PC-3 (cell line): ENCODE measurements at regions of chr3 and their contacts with region 1.

Region 1: GRCh38 chr3:81485444-81485865 is 276.0 kb downstream of the GBE1 start:
- DNase-seq: peak; percentile 73
- ATAC-seq: peak; percentile 98
- H3K4me3 ChIP-seq: no peak overlapping the region
- H3K27ac ChIP-seq: no peak overlapping the region
- H3K4me1 ChIP-seq: peaks cover 5% of the 10 kb centered on the region
- H3K27me3 ChIP-seq: no peaks in the 10 kb centered on the region
- CTCF ChIP-seq: no peak

Region 2: DNA sequence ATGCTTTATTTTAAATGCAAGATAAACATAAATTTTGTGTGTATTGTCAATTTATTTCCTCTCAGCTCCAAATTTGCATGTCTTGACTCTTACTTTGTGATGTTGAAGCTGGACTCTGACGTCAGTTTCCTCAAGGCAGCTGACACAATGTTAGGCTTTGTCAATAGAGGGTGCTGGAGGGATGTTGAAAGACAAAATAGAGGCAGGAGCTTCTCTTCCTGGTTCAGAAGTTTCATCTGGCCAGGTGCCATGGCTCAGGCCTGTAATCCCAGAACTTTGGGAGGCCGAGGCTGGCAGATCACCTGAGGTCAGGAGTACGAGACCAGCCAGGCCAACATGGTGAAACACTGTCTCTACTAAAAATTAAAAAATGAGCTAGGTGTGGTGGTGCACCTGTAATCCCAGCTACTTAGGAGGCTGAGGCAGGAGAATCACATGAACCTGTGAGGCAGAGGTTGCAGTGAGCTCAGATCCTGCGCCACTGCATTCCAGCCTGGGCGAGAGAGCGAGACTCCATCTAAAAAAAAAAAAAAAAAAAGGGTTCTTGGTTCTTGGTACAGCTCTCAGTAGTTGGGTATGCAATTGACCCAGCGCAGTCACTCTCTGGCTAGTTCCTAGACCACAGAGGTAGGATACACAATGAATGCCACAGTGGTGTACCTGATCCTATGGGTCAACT is 132.4 kb before region 1 on chr3:
- CTCF ChIA-PET with region 1: interaction called, 3 read pairs
- POLR2A ChIA-PET with region 1: no interaction called
- intact Hi-C with region 1: loop called (anchors 5 kb)
- DNase-seq: peak; percentile 69
- ATAC-seq: peak; percentile 72
- H3K4me3 ChIP-seq: no peak overlapping the region
- H3K27ac ChIP-seq: no peak overlapping the region
- H3K4me1 ChIP-seq: no peaks in the 10 kb centered on the region
- H3K27me3 ChIP-seq: no peaks in the 10 kb centered on the region
- CTCF ChIP-seq: peak; percentile 58

Region 3: DNA sequence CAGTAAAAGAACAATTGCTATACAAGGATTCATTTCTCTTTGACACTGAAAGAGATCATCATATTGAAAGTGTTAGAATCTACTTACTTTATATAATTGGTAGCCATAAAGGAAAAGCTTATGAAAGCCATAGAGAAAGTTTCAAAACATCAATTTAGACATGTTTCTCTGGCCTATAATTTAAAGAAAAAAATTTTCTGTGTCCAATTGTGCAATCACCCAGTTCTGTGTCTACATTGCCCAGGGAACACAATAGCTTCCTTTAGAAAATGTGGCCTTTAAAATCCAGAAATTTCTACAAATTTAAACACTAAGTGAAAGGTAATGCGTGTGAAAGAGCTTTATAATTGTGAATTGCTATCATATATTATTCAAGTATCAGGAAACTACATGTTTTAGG is 16.8 kb after region 1 on chr3:
- CTCF ChIA-PET with region 1: no interaction called
- POLR2A ChIA-PET with region 1: no interaction called
- intact Hi-C with region 1: no loop called
- DNase-seq: no peak
- ATAC-seq: no peak
- H3K4me3 ChIP-seq: no peak overlapping the region
- H3K27ac ChIP-seq: no peak overlapping the region
- H3K4me1 ChIP-seq: no peaks in the 10 kb centered on the region
- H3K27me3 ChIP-seq: no peaks in the 10 kb centered on the region
- CTCF ChIP-seq: no peak

Region 4: DNA sequence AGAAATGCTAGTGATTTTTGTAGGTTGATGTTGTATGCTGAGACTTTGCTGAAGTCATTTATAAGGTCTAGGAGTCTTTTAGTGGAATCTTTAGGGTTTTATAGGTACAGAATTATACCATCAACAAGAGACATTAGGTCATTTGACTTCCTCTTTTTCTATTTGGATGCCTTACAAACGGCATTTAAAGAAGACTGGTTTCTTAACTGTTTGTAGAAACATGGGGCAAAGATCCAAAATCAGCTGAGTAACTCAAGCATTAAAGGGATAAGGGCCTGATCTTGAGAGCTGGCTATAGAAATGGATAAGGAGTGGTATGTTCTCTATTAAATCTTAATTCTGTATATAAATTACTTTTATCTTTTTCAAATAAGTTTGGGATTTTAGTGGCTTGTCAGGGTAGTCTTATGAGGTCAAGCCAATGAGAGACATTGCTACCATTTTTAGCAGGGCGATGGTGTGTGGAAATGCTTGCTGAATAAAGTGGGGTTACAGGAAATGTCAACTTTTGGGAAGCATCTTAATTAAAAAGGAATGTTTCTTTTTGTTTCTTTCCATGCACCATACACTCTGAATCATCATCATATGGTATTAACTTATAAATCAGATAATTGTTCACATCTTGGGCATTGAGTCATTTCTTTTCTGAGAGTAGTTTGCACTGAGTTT is 473.7 kb after region 1 on chr3:
- CTCF ChIA-PET with region 1: no interaction called
- POLR2A ChIA-PET with region 1: no interaction called
- intact Hi-C with region 1: no loop called
- DNase-seq: no peak
- ATAC-seq: no peak
- H3K4me3 ChIP-seq: no peak overlapping the region
- H3K27ac ChIP-seq: no peak overlapping the region
- H3K4me1 ChIP-seq: peaks cover 9% of the 10 kb centered on the region; the same call in 1 of the 2 replicates
- H3K27me3 ChIP-seq: no peaks in the 10 kb centered on the region
- CTCF ChIP-seq: no peak